Colonic mucosa (tissue), 4 donors: ENCODE measurements at regions of chr21 and their contacts with region 1.

Region 1: GRCh38 chr21:36104317-36105300 is 30.3 kb upstream of the CBR3 start:
- DNase-seq: peak; percentile 45
- H3K4me3 ChIP-seq: no peak overlapping the region
- H3K27ac ChIP-seq: no peak overlapping the region
- H3K4me1 ChIP-seq: no peaks in the 10 kb centered on the region
- H3K27me3 ChIP-seq: no peaks in the 10 kb centered on the region
- CTCF ChIP-seq: peak; percentile 27

Region 2: GRCh38 chr21:35861661-35862060 is 242.9 kb before region 1 on chr21:
- intact Hi-C with region 1: no loop called
- DNase-seq: no peak
- H3K4me3 ChIP-seq: no peak overlapping the region
- H3K27ac ChIP-seq: no peak overlapping the region
- H3K4me1 ChIP-seq: no peaks in the 10 kb centered on the region
- H3K27me3 ChIP-seq: no peaks in the 10 kb centered on the region
- CTCF ChIP-seq: no peak

Region 3: DNA sequence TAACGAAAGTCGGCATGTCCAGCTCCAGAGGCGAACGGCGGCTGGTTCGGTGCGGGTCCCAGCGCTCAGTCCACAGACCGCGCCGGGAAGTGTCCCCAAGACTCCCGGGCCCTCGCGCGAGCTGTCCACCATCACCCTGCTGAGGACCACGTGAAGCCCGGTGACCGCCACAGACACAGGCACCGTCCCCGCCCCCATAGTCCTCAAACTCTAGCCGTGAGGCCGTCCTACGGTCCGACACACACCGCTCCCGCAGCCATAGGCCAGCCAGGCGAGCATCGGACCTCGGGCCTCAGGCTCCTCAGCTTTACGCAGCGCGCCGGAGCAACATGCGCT is 44.8 kb before region 1 on chr21:
- intact Hi-C with region 1: loop called (anchors 10 kb)
- DNase-seq: peak; percentile 58
- H3K4me3 ChIP-seq: peak overlapping the region; percentile 65
- H3K27ac ChIP-seq: peak overlapping the region; percentile 91
- H3K4me1 ChIP-seq: peaks cover 6% of the 10 kb centered on the region
- H3K27me3 ChIP-seq: no peaks in the 10 kb centered on the region
- CTCF ChIP-seq: no peak

Region 4: DNA sequence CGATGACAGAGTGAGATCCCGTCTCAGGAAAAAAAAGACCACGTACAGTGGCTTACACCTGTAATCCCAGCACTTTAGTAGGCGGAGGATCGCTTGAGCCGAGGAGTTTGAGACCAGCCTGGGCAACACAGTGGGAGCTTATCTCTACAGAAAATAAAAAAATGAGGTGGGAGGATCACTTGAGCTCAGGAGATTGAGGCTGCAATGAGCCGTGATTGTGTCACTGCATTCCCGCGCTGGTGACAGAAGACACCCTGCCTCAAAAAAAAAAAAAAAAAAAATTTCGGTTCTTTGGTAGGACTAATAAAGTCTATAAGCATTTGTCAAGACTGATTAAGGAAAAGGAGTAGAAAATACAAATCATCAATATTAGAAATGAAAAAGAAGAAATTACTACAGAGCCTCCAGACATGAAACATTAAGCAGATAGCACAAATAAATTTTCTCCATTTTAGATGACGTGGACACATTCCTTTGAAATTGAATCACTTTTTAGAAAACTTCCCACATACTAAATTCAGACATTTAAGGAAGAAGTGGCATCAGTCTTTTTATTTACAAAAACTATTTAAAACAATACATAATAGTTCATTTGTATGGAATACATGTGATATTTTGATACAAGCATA is 245.8 kb after region 1 on chr21:
- intact Hi-C with region 1: no loop called
- DNase-seq: no peak
- H3K4me3 ChIP-seq: no peak overlapping the region
- H3K27ac ChIP-seq: no peak overlapping the region
- H3K4me1 ChIP-seq: no peaks in the 10 kb centered on the region
- H3K27me3 ChIP-seq: no peaks in the 10 kb centered on the region
- CTCF ChIP-seq: no peak